ENCODE measurements at regions of chr2 and their contacts with region 1.

Region 1: DNA sequence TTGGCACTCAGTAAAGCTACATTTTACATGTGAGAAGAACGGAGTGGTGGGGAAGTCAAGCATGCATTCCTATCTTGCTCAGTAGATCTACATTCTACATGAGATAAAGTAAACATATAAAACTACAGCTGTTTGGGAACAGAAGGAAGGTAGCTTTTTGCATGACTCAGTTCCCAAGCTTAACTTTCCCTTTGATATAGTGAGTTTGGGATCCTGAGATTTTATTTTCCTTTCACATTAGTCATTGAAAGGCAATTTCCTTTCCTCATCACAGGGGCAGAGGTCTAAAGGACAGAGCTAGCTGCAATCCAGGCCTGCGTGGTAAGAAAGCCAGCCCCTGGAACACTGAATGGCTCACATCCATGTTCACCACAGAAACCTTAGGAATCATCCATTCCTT is 257.2 kb downstream of the SRBD1 start:
- DNase-seq: peak; percentile 97
- H3K4me3 ChIP-seq: no peak overlapping the region
- H3K27ac ChIP-seq: peak overlapping the region; percentile 85
- H3K4me1 ChIP-seq: peaks cover 17% of the 10 kb centered on the region
- H3K27me3 ChIP-seq: no peaks in the 10 kb centered on the region
- CTCF ChIP-seq: no peak
- POLR2A ChIP-seq: peak; percentile 38

Region 2: DNA sequence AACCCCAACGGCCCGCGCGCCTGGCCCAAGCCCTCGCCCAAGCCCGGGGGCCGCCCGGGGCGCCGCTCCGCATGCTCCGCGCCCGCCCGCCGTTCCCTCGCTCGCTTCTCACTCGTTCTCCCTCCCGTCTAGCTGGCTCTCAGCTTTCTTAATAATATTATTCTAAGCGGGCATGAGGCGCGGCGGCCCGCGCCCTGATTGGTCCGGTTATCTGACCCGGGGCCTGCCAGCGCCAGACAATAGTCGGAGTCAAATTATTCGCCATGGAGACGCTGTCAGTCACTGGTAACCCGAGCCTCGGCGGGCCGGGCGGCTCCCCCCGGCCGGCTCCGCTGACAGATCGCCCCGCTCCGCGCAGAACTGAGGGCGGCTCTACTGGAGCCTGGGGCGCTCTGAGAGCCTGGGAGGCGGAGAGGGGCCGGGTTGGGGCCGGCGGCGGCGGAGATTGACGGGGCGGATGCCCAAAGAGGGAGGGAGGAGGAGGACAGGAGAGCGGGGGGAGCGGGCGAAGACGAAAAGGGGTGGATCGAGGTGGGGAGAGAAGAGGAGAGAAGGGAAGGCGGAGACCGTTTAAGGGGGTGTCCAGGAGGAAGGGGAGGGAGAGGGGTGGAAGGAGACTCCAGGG is 344.5 kb before region 1 on chr2 and contains the start of gene SIX2:
- CTCF ChIA-PET with region 1: interaction called, 4 read pairs
- POLR2A ChIA-PET with region 1: no interaction called
- dilution Hi-C with region 1: no loop called
- intact Hi-C with region 1: loop called (anchors 5 kb)
- DNase-seq: peak; percentile 97
- H3K4me3 ChIP-seq: peak within 1 kb of the TSS; percentile 15 to 48 (median 38)
- H3K27ac ChIP-seq: no peak within 1 kb of the TSS
- H3K4me1 ChIP-seq: peaks cover 26% of the 10 kb centered on the region
- H3K27me3 ChIP-seq: peaks cover 62 to 85% of the 10 kb centered on the region in 2 experiments
- CTCF ChIP-seq: no peak
- POLR2A ChIP-seq: no peak
- total RNA-seq, gene SIX2: 0.24 and 0.32 TPM in 2 replicates

Region 3: DNA sequence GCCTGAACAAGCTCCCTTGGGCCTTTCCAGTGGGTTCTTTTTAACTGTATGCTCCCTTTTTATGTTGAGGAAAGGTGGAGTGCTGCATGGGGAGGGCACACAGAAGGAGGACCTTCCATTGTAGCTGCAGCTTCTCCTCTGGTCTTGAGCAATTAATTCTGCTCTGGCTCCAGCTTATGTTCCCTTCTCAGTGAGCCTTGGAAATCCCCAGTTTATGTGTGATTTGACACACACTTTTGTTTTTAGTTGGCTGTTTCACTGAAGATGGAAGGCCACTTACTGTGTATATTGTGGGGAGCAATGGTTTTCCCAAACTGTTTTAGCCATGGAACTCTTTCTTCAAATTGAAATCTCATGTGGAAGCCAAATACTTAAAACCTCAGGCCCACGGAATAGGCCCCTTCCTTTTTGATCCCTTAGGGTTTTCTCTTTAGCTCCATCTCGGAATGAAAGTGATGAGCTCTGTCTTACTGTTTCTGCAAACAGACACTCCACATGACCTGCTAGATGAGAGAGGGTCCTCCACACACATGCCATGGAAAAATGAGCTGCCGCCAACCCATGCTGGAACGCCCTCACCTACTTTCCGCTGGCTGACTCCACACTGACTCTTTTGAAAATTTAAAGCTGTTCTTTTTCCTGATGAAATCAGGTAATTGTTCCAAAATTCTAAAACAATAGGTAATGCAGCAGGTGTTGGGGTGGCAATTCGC is 63.7 kb before region 1 on chr2:
- CTCF ChIA-PET with region 1: no interaction called
- POLR2A ChIA-PET with region 1: no interaction called
- dilution Hi-C with region 1: no loop called
- intact Hi-C with region 1: loop called (anchors 1 kb)
- DNase-seq: no peak
- H3K4me3 ChIP-seq: no peak overlapping the region
- H3K27ac ChIP-seq: peak overlapping the region; percentile 3
- H3K4me1 ChIP-seq: peaks cover 54% of the 10 kb centered on the region
- H3K27me3 ChIP-seq: no peaks in the 10 kb centered on the region
- CTCF ChIP-seq: no peak
- POLR2A ChIP-seq: no peak

Region 4: DNA sequence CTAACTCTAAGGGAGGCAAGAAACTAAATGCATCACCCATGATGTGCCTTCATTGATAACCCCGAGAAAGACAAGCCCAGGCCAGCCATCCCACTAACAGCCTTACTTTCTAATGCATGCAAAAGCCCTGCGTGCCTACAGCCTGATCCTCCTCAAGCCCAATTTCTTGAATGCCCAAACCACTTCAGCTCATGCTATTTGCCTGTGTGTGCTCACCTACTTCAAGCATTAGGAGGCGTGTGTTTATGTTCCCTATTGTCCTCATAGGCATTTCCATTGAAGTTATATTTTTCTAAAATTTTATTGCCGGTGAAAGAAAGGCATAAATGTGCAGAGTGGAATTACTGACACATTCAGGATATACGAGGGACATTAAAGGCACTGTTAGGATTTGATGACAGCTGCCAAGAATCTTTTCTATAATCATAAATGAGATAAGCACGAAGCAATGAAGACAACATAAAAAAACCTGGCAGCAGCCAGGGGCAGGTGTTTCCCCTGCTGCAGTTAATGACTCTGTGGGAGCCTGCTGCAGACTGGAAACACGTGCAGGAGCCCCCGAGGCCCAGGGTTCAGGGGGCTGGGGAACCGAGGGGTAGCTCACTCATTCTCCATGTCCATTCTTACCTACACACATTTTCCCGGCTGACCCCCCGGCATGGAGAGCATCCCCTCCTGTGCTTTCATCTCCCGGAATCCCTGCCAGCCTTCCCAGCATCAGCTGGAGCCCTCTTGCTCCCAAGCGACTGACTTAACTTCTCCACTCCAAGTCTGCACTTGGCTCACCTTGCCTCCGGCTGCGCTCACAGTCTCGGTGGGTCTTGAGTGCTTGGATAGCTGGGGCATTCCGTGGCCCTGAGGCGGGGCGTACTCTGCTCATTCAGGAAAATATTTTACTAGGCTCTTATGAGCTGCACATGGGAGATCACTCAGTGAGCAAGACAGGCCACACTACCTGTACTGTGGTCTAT is 52.3 kb before region 1 on chr2:
- CTCF ChIA-PET with region 1: interaction called, 8 read pairs
- POLR2A ChIA-PET with region 1: no interaction called
- dilution Hi-C with region 1: no loop called
- intact Hi-C with region 1: loop called (anchors 1 kb)
- DNase-seq: peak; percentile 95
- H3K4me3 ChIP-seq: no peak overlapping the region
- H3K27ac ChIP-seq: no peak overlapping the region
- H3K4me1 ChIP-seq: peaks cover 12% of the 10 kb centered on the region
- H3K27me3 ChIP-seq: no peaks in the 10 kb centered on the region
- CTCF ChIP-seq: no peak
- POLR2A ChIP-seq: peak; percentile 28

Region 5: DNA sequence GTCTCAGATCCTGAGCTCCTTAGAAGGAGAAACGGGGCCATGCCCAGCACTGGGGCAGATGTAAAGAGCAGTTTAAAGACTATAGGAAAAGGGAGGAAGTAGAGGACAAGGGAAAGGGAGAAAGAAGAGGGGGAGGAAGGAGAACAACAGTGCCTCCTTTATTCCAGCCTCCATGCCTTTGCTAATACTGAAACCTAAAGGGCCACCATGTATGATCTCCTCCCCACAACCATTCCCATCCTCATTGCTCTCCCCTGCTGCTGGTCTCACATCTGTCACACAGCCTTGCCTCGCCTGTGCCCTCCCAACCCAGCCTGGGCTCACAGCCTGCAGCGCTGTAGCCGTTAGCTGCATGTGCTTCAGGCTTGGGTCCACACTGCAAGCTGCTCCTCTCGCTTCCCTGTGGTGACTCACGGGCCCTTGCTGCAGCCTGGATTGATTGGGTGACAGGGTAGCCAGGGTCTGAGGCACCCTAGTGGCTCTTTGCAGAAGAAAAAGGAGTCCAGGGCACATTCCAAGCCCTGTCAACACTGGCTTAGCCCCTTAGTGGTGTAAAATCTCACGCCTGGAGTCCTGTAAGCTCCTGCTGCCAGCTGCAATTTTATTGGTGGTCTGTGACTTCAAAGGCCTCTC is 24.7 kb before region 1 on chr2:
- CTCF ChIA-PET with region 1: interaction called, 4 read pairs
- POLR2A ChIA-PET with region 1: no interaction called
- dilution Hi-C with region 1: no loop called
- intact Hi-C with region 1: loop called (anchors 2 kb)
- DNase-seq: no peak
- H3K4me3 ChIP-seq: no peak overlapping the region
- H3K27ac ChIP-seq: no peak overlapping the region
- H3K4me1 ChIP-seq: peaks cover 10% of the 10 kb centered on the region
- H3K27me3 ChIP-seq: no peaks in the 10 kb centered on the region
- CTCF ChIP-seq: no peak
- POLR2A ChIP-seq: no peak

Region 6: DNA sequence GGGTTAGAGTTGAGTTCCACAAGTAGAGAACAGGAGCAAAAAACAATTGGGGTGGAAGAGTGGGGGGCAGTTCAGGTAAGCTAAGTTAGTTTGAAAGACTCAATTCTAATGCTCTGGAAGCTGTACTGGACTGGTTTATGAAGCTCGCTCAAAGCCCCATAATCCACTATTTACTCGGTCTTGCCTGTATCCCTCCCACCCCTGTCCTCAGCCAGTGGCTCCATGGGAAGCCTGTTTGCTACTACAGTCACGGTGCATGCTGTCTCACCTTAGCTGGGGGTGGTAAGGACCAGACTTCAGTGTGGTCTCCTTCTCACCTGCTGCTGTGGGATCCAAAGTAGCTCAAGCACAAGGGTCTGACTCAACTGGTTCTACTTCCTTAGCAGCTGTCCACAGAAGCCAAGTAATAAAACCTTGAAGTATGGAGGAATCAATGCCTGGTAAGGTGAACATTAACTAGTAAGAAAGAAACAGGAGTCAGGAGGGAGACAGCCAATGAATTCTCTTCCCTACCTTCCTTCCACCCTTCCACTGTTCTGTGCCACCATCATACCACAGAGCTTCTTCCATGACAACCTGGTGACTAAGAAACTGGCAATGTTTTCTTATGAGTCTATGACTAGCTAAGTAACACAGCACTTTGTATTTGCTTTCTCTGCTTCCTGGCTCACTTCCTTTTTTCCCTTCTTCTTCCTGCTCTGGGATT is 26.4 kb after region 1 on chr2:
- CTCF ChIA-PET with region 1: interaction called, 7 read pairs
- POLR2A ChIA-PET with region 1: interaction called, 3 read pairs
- dilution Hi-C with region 1: no loop called
- intact Hi-C with region 1: loop called (anchors 2 kb)
- DNase-seq: peak; percentile 57
- H3K4me3 ChIP-seq: no peak overlapping the region
- H3K27ac ChIP-seq: peak overlapping the region; percentile 72
- H3K4me1 ChIP-seq: peaks cover 31% of the 10 kb centered on the region
- H3K27me3 ChIP-seq: no peaks in the 10 kb centered on the region
- CTCF ChIP-seq: no peak
- POLR2A ChIP-seq: no peak

Measured in endothelial cell of umbilical vein (primary cell).